Activated naive CD4-positive, alpha-beta T cell treated with anti-CD3 and anti-CD28 coated beads for 36 hours (primary cell): ENCODE measurements at regions of chr2 and their contacts with region 1.

Region 1: DNA sequence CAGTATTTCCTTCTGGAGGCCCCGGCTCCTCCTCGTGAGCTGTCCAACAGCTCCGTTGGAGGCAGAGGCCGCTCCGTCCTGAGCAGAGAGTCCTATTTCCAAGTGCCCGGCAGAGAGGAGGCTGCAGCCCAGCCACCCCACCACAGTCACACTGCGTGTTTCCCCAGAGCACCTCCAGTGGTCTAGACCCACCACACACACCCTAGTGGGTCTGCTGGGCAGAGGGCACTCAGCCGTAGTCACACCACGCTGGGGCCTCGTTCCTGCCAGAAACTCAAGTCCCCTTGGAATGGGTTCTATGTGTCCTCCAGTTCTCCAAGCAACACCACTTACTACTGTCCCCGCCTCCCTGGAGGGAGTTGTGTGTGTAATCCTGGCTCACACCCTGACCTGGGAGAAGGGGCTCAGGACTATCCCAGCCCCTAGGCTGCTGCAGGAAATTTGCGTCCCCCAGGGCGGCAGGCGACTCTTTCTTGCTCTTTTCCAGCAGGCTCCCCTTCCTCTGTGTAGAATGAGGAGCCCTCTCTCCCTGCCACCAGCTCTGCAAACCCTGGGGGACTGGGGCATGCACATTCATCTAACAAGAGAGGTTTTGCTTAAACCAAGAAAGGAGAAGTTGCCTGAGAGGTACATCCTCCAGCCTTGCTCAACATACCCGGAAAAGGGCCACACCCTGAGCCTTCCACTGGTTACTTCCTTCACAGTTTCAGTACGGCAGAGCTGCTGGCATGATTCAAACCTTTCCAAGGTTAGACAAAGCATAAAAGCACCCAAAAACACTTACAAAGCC is 114.1 kb downstream of the NDUFA10 start:
- DNase-seq: peak; percentile 65
- H3K4me3 Mint-ChIP-seq: no peak overlapping the region
- H3K27ac Mint-ChIP-seq: no peak overlapping the region
- H3K4me1 Mint-ChIP-seq: peaks cover 14% of the 10 kb centered on the region
- H3K27me3 Mint-ChIP-seq: no peaks in the 10 kb centered on the region

Region 2: GRCh38 chr2:239666855-239667376 is 244.1 kb before region 1 on chr2:
- CTCF ChIA-PET with region 1: no interaction called
- intact Hi-C with region 1: no loop called
- DNase-seq: no peak
- H3K4me3 Mint-ChIP-seq: no peak overlapping the region
- H3K27ac Mint-ChIP-seq: no peak overlapping the region
- H3K4me1 Mint-ChIP-seq: no peaks in the 10 kb centered on the region
- H3K27me3 Mint-ChIP-seq: peaks cover 7% of the 10 kb centered on the region

Region 3: DNA sequence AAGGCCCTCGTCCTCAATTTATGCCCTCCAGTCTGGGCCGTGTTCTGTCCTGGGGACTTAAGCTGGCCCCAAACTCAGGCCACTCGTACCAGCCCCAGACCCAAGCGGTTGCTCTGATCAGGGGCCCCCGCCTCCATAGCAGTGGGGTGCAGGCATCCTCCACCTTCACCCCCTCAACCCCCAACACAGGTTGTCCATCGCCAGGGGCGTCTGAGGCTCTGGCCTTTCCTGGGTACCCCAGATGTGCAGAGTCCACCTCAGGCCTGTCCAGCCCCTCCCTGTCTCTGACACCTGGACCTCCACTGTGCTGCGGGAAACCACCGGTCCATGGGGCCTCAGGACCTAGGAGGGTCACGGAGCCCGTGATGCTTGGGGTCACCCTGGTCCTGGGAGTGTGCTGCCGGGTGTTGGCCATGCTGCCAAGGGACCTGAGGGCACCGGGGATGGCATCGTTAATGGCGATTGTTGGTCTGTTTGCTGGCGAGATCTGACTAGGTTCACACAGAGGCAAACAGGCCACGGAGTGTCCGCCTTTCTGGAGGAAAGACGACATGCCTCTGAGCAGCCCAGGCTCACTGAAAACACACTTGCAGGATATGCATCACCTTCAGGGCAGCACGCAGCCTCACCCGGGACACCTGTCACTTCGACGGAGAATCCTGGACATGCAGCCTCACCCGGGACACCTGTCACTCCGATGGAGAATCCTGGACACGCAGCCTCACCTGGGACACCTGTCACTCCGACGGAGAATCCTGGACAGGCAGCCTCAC is 41.5 kb before region 1 on chr2:
- CTCF ChIA-PET with region 1: no interaction called
- intact Hi-C with region 1: no loop called
- DNase-seq: no peak
- H3K4me3 Mint-ChIP-seq: no peak overlapping the region
- H3K27ac Mint-ChIP-seq: no peak overlapping the region
- H3K4me1 Mint-ChIP-seq: no peaks in the 10 kb centered on the region
- H3K27me3 Mint-ChIP-seq: no peaks in the 10 kb centered on the region

Region 4: DNA sequence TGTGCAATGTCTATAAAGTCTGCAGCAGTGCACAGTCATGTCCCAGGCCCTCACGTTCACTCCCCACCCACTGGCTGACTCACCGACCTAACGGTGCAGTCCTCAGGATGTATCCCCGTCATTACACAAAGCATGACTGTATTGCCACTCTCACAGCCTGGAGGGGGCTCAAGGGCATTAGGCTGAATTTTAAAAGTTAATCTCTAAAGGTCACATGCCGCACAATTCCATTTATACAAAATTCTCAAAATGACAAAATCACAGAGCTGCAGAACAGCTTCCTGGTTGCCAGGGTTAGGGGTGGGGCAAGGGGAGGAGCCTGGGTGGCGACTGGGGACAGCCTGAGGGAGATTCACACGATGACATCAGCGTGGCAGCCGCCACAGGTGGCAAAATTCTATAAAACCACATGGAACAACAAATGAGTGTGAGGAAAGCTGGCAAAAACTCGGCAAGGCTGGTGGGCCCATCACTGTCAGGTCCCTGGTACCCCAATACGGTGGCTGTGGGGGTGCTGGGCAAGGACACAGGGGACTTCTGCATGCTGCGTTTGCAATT is 16.5 kb after region 1 on chr2:
- CTCF ChIA-PET with region 1: no interaction called
- intact Hi-C with region 1: loop called (anchors 2 kb)
- DNase-seq: peak; percentile 83
- H3K4me3 Mint-ChIP-seq: no peak overlapping the region
- H3K27ac Mint-ChIP-seq: peak overlapping the region; percentile 66
- H3K4me1 Mint-ChIP-seq: peaks cover 17% of the 10 kb centered on the region
- H3K27me3 Mint-ChIP-seq: peaks cover 5% of the 10 kb centered on the region